Breast epithelium (tissue), 4 donors: ENCODE measurements at regions of chr16 and their contacts with region 1.

Region 1: GRCh38 chr16:23523321-23523720 is 13.0 kb upstream of the GGA2 start:
- DNase-seq: no peak
- H3K4me3 ChIP-seq: no peak overlapping the region
- H3K27ac ChIP-seq: no peak overlapping the region
- H3K4me1 ChIP-seq: no peaks in the 10 kb centered on the region
- H3K27me3 ChIP-seq: no peaks in the 10 kb centered on the region
- CTCF ChIP-seq: no peak
- POLR2A ChIP-seq: no peak

Region 2: DNA sequence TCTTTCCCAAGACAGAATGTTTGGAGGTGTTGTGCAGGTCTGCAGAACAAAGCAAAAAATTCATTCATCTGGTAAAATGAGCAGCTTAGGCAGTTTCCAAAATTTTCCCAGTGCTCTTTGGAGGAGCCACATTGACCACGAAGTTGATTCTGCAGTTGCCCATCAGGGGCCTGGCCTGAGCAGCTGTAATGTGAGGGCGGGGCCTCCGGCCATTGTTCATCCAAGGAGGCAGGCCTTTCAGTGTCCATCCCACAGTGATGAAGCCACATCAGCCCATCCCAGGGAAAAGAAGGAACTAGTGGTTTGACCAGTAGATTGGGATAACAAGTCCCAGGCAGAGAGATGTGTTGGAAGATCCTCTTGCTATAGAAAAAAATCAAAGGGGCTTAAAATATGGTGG is 44.3 kb after region 1 on chr16:
- intact Hi-C with region 1: loop called (anchors 2 kb)
- DNase-seq: no peak
- H3K4me3 ChIP-seq: no peak overlapping the region
- H3K27ac ChIP-seq: no peak overlapping the region
- H3K4me1 ChIP-seq: no peaks in the 10 kb centered on the region
- H3K27me3 ChIP-seq: no peaks in the 10 kb centered on the region
- CTCF ChIP-seq: no peak
- POLR2A ChIP-seq: no peak